ENCODE measurements at regions of chr1 and their contacts with region 1.

Region 1: GRCh38 chr1:64136752-64137411 is 66.5 kb upstream of the UBE2U start:
- DNase-seq: peak; percentile 74
- H3K4me3 ChIP-seq: no peak overlapping the region
- CTCF ChIP-seq: peak; percentile 80

Region 2: GRCh38 chr1:63615768-63616420 is 521.0 kb before region 1 on chr1:
- CTCF ChIA-PET with region 1: interaction called, 21 read pairs
- POLR2A ChIA-PET with region 1: no interaction called
- DNase-seq: no peak
- H3K4me3 ChIP-seq: no peak overlapping the region
- CTCF ChIP-seq: peak; percentile 40

Region 3: DNA sequence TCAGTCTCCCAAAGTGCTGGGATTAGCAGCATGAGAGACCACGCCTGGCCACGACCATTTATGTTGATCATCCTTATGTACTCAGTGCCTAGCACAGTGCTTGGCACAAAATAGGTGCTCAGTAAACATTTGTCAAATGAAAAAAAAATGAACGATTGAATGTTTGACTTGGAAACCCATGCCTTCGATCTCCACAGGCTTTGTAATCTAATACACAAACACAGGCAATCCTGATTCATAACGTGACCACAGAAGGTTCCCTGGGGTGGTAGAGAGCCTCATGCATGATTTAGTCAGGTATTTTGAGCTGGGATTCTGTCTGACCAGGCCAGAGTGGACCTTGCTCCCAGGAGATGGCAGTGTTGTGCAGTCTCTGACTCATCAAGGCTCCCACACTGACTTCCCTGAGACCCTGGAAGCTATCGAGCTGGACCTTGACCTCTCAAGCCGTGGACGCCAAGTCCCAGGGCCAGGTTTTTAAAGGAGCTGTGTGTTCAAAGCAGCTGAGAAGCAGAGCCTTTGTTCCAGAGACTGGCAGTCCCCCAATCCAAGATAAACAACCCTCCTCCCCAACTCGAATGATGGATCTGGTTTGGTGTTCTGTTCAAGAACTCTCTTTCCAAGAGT is 462.5 kb before region 1 on chr1:
- CTCF ChIA-PET with region 1: interaction called, 33 read pairs
- POLR2A ChIA-PET with region 1: no interaction called
- DNase-seq: no peak
- H3K4me3 ChIP-seq: no peak overlapping the region
- CTCF ChIP-seq: peak; percentile 84

Region 4: DNA sequence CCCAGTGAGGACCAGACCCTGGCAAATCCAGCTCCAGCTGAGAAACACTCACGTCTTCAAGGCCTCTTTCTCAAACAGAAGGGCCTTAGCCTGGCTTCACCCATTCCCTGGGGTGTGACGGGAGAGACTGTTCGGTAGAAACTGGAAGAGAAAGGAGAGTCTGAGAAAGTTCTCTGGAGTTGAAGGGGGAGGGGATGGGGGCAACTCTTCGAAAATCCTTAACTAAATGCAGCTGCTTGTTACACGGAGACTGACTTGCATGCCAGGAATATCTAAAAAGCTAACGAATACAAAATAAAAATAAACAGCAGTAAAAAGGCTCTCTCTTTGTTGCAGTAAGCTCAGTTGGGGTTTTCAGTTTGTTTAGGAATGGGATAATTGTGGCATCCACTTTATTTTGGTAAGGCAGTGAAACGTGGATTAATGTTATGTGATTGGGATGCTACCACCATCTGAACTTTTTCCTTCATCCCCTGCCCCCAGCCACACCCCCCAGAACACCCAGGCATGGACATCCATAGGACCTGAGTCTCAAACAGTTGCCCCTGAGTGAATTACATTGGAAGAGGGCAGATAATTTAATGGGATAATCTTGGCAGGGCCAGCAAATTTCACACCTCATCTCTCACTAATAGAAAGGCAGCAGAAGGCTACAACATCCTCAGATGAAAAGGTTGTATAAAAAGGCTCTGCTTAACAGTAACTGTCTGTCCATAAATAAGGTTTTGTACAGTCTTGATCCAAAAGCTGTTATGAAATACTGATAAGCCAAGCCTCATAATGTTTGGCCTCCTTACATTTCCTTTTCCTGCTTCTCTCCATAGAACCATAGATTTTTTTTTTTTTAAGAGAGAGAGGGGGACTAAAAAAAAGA is 357.3 kb before region 1 on chr1:
- CTCF ChIA-PET with region 1: interaction called, 16 read pairs
- POLR2A ChIA-PET with region 1: no interaction called
- DNase-seq: peak; percentile 34
- H3K4me3 ChIP-seq: no peak overlapping the region
- CTCF ChIP-seq: no peak

Region 5: DNA sequence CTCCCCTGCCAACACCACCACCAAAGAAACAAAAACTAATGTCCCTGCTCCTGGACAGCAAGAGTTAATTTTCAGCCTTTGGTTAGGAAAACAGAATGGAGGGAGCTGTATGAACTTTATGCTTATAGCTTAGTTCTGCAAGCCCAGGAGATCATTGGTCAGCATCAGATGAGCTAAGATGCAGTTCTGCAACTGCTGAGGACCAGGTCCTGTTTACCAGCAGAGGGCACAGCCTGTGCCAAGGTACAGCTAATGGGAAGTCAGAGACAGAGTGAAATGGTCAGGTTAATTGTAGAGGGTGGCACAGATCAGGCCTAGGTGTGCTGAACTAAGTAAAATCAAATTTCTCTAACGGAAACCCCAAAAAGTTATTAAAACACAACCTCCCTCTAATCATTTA is 201.7 kb before region 1 on chr1:
- CTCF ChIA-PET with region 1: interaction called, 19 read pairs
- POLR2A ChIA-PET with region 1: no interaction called
- DNase-seq: no peak
- H3K4me3 ChIP-seq: no peak overlapping the region
- CTCF ChIP-seq: peak; percentile 30

Region 6: GRCh38 chr1:64121766-64122385 is 15.0 kb before region 1 on chr1:
- CTCF ChIA-PET with region 1: interaction called, 20 read pairs
- POLR2A ChIA-PET with region 1: no interaction called
- DNase-seq: no peak
- H3K4me3 ChIP-seq: no peak overlapping the region
- CTCF ChIP-seq: no peak

Region 7: DNA sequence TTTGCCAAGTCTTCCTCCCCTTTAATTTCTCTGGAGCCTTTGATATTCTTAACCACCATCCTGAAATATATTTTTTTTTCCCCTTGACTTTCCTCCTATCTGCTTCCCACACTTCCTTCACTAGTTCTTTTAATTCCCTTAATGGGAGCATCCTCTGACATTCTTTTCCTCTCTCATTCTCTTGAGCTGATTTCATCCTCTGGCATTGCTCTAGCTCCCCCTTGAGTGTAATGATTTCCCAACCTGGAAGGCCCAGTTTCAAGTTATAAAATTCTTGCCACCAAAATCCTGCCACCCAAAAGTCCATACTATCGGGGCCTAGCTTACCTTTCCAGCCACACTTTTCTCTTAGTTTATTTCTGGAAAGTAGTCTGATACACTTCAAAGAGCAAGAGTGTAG is 27.1 kb after region 1 on chr1:
- CTCF ChIA-PET with region 1: interaction called, 48 read pairs
- POLR2A ChIA-PET with region 1: interaction called, 3 read pairs
- DNase-seq: no peak
- H3K4me3 ChIP-seq: no peak overlapping the region
- CTCF ChIP-seq: peak; percentile 58

Region 8: DNA sequence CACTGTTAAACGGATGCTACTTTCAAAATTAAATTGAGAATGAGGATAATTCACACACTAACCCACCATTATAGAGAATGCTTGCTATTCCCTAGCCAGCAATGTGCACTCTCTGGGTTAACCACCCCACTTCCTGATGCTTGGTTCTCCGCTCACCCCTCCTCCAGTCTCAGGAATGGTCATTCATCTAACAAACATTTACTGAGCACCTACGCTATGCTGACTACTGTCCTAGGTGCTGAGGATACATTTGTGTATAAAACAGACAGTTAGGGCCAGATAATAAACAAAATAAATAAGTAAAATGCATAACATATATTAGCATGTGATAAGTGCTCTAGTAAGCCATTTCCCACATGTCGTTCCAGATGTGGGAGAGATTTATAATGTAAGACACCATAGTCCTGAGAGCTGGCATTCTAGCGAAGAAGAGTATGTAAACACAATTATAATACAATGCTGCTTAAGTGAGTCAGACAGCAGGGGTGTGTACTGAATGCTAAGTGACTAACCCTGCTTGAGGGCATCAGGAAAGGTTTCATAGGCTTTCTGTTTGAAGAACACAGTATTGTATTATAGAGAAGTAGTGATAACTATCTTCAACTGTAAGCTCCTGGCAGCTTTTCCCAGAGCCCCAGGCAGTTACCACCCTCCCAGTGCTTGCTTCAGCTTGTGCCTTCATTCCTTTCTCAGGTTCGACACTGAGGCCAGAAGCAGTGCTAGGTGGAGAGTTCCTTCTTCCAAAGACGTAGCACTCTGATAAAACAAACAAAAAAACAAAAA is 206.4 kb after region 1 on chr1:
- CTCF ChIA-PET with region 1: no interaction called
- POLR2A ChIA-PET with region 1: no interaction called
- DNase-seq: no peak
- H3K4me3 ChIP-seq: no peak overlapping the region
- CTCF ChIP-seq: no peak